ENCODE measurements at regions of chr18 and their contacts with region 1.

Region 1: DNA sequence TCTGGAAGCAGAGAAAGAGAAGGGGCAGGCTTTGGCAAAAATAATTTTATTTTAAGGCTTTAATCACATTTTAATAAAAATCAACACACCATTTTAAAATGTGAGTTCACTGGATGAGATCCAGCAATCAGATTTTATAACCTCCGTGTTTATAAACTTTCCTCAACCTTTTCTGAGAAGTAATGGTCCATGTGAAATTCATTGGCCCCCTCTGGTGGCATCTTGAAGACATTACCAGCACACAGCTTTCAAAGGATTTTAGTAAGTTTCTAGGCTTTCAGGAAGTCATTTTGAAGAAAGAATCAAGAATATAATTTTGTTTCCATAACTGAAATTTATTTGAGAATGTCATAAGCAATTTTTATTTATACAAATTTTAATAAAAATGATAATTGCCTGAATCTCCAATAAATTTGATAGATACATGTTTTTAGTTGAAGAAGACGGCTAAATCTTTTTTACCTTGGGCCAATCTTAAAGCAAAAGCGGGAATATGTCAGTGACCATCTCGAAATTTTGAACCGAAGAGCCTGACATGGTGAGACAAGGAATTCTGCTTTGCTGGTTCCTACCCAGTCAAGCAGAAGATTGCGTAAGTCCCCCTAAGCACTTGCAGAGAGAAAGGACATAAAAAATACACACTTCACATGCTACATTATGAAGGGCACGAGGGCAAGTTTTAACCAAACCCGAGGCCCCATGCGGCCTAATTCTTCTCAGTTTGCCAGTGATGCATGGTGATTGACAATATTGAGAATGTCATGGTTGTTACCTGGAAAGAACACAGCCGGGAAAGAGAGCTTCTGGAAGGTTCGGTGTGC is 128.4 kb upstream of the CBLN2 start:
- DNase-seq: peak; percentile 12
- H3K4me3 ChIP-seq: no peak overlapping the region
- H3K27ac ChIP-seq: no peak overlapping the region
- H3K4me1 ChIP-seq: no peaks in the 10 kb centered on the region
- H3K27me3 ChIP-seq: no peaks in the 10 kb centered on the region
- CTCF ChIP-seq: peak; percentile 36 to 46
- POLR2A ChIP-seq: no peak

Region 2: DNA sequence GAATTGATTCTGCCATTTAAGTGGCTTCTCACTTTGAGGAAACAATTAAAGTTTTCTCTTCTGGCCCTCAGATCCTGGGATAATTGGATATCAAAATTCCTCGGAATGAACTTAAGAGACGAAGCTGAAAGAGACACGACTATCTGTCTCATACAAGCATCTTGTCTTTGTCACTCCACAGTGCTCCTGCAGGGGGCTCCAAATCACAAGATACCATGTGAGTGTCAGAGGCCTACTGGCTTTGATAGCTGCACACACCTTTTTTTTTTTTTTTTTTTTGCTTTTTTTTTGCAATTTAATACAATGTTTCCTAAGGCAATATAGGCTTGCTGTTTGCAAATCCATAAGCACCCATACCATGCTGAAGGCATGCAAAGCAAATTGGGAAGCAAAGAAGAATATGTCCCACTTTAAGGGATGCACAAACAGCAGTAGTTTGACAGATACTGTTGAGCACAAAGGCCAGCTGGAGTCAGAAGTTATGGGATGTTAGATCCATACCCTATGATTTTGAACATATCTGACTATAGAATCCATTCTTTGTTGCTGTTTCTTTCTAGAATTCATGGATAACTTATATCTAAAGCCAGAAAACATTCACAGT is 19.5 kb before region 1 on chr18:
- CTCF ChIA-PET with region 1: no interaction called
- POLR2A ChIA-PET with region 1: no interaction called
- dilution Hi-C with region 1: no loop called
- intact Hi-C with region 1: loop called (anchors 1 kb)
- DNase-seq: peak; percentile 26
- H3K4me3 ChIP-seq: no peak overlapping the region
- H3K27ac ChIP-seq: no peak overlapping the region
- H3K4me1 ChIP-seq: no peaks in the 10 kb centered on the region
- H3K27me3 ChIP-seq: no peaks in the 10 kb centered on the region
- CTCF ChIP-seq: peak; percentile 35 to 41
- POLR2A ChIP-seq: no peak